Calu3 (cell line): ENCODE measurements at regions of chr4 and their contacts with region 1.

Region 1: DNA sequence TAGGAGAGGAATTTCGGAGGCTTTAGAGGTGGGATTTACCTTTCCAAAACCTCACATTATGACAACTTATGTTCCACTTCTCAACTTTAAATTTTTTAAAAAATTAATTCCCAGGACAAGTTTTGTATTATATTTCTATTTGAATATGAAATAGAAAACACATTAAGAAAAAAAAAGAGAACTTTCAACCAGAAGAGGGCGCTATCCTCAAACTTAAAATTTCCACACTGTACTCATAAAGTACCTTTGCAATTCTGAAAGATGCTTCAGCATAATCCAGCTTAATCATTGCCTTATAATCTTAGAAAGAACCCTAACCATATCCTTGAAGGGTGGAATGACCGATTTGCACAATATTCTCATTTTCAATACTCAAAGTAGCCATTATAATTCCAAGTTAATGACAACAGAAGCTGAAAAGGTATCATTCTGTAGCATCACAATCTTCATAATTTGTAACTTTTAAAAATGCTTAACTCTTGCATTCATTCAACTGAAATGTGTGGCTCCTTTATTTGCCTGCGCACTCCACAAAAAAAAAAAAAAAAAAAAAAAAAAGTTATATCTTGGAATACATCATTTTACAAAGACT is 158.0 kb downstream of the KCNIP4 start:
- DNase-seq: peak; percentile 8
- H3K4me3 Mint-ChIP-seq: no peak overlapping the region
- H3K27ac Mint-ChIP-seq: no peak overlapping the region
- H3K4me1 Mint-ChIP-seq: no peaks in the 10 kb centered on the region
- H3K27me3 Mint-ChIP-seq: no peaks in the 10 kb centered on the region
- CTCF ChIP-seq: no peak

Region 2: GRCh38 chr4:22099896-22100295 is 309.4 kb after region 1 on chr4:
- CTCF ChIA-PET with region 1: no interaction called
- intact Hi-C with region 1: loop called (anchors 10 kb)
- DNase-seq: no peak
- H3K4me3 Mint-ChIP-seq: no peak overlapping the region
- H3K27ac Mint-ChIP-seq: no peak overlapping the region
- H3K4me1 Mint-ChIP-seq: no peaks in the 10 kb centered on the region
- H3K27me3 Mint-ChIP-seq: no peaks in the 10 kb centered on the region
- CTCF ChIP-seq: no peak

Region 3: GRCh38 chr4:22129454-22130029 is 339.0 kb after region 1 on chr4:
- CTCF ChIA-PET with region 1: interaction called, 6 read pairs
- intact Hi-C with region 1: loop called (anchors 5 kb)
- DNase-seq: peak; percentile 40
- H3K4me3 Mint-ChIP-seq: no peak overlapping the region
- H3K27ac Mint-ChIP-seq: no peak overlapping the region
- H3K4me1 Mint-ChIP-seq: no peaks in the 10 kb centered on the region
- H3K27me3 Mint-ChIP-seq: no peaks in the 10 kb centered on the region
- CTCF ChIP-seq: peak; percentile 46

Region 4: GRCh38 chr4:22356987-22357596 is 566.6 kb after region 1 on chr4:
- CTCF ChIA-PET with region 1: interaction called, 31 read pairs
- intact Hi-C with region 1: loop called (anchors 2 kb)
- DNase-seq: no peak
- H3K4me3 Mint-ChIP-seq: no peak overlapping the region
- H3K27ac Mint-ChIP-seq: no peak overlapping the region
- H3K4me1 Mint-ChIP-seq: no peaks in the 10 kb centered on the region
- H3K27me3 Mint-ChIP-seq: no peaks in the 10 kb centered on the region
- CTCF ChIP-seq: no peak

Region 5: DNA sequence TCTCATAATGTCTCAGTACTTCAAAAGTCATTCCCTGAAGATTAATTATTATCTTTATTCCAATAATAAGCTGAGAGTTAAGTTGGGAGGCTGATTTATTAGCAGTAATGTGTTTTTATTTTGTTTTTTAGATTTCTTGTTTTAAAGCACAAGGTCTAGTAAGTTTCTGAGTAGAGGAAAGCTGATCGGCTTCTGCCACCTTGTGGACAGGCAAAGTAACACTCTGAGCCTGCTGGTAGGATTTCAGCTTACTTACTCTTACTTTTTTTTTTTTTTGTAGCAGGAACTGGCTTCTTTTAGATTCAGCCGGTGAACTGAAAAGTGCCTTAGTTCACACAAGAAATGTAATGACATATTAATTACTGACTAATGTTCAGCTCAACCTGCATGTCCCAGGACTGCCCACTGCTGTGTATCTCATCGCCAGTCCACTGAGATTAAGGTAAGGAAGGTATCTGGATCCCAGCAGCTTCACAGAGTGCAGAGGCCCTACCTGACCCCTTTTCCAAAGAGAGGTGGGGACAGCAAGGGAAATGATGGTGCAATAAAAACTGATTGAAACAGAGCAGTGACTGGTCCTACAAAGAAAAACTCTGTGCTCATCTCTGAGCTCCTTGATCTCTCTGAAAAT is 598.8 kb after region 1 on chr4:
- CTCF ChIA-PET with region 1: interaction called, 36 read pairs
- intact Hi-C with region 1: loop called (anchors 1 kb)
- DNase-seq: peak; percentile 38
- H3K4me3 Mint-ChIP-seq: no peak overlapping the region
- H3K27ac Mint-ChIP-seq: no peak overlapping the region
- H3K4me1 Mint-ChIP-seq: no peaks in the 10 kb centered on the region
- H3K27me3 Mint-ChIP-seq: no peaks in the 10 kb centered on the region
- CTCF ChIP-seq: no peak

Region 6: GRCh38 chr4:22688236-22688635 is 897.7 kb after region 1 on chr4:
- CTCF ChIA-PET with region 1: no interaction called
- intact Hi-C with region 1: loop called (anchors 5 kb)
- DNase-seq: no peak
- H3K4me3 Mint-ChIP-seq: no peak overlapping the region
- H3K27ac Mint-ChIP-seq: no peak overlapping the region
- H3K4me1 Mint-ChIP-seq: no peaks in the 10 kb centered on the region
- H3K27me3 Mint-ChIP-seq: no peaks in the 10 kb centered on the region
- CTCF ChIP-seq: no peak